PC-9 (cell line): ENCODE measurements at regions of chr4 and their contacts with region 1.

Region 1: DNA sequence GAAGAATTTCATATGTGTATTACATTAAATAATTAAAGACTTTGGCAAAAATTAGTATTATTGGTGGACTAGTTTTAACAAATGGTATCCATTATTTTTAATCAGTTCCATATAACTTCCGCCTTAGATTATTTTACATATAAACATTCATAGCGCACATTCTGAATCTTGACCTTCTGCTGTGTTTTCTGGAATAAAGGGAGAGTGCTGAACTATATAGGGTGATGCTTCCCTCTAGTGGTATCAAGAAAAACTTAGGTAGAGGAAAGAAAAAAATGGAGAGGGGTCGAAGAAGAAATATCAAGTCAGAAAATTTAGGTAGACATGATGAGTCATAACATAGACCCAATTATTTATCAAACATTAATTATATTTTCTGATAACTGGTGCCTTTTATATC is 155.6 kb upstream of the PACRGL start:
- DNase-seq: no peak
- H3K4me3 ChIP-seq: no peak overlapping the region
- H3K27ac ChIP-seq: no peak overlapping the region
- H3K4me1 ChIP-seq: no peaks in the 10 kb centered on the region
- H3K27me3 ChIP-seq: no peaks in the 10 kb centered on the region
- CTCF ChIP-seq: peak; percentile 56

Region 2: DNA sequence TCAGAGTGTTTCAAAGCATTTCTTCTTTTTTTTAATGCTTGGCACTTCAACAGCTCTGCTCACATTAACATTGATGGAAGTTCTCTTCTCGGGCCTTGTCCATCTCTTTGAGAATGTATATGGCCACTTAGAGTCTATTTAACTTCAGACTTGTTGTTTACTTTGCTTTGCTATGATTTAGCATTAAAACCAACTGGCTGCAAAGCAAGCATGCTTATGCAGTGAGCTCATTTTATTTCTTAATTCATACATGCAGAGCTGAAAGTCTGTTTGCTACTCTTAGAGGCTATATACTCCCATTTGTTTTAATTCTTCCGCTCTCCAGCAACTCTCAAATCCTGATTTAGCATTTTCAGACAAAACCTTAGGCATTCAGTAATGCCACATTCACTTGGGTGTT is 48.0 kb after region 1 on chr4:
- CTCF ChIA-PET with region 1: no interaction called
- POLR2A ChIA-PET with region 1: no interaction called
- intact Hi-C with region 1: no loop called
- DNase-seq: no peak
- H3K4me3 ChIP-seq: no peak overlapping the region
- H3K27ac ChIP-seq: no peak overlapping the region
- H3K4me1 ChIP-seq: no peaks in the 10 kb centered on the region
- H3K27me3 ChIP-seq: no peaks in the 10 kb centered on the region
- CTCF ChIP-seq: no peak

Region 3: GRCh38 chr4:20684852-20685763 is 140.5 kb after region 1 on chr4:
- CTCF ChIA-PET with region 1: interaction called, 3 read pairs
- POLR2A ChIA-PET with region 1: no interaction called
- intact Hi-C with region 1: loop called (anchors 2 kb)
- DNase-seq: no peak
- H3K4me3 ChIP-seq: no peak overlapping the region
- H3K27ac ChIP-seq: no peak overlapping the region
- H3K4me1 ChIP-seq: no peaks in the 10 kb centered on the region
- H3K27me3 ChIP-seq: no peaks in the 10 kb centered on the region
- CTCF ChIP-seq: peak; percentile 70